ENCODE measurements at regions of chr2 and their contacts with region 1.

Region 1: DNA sequence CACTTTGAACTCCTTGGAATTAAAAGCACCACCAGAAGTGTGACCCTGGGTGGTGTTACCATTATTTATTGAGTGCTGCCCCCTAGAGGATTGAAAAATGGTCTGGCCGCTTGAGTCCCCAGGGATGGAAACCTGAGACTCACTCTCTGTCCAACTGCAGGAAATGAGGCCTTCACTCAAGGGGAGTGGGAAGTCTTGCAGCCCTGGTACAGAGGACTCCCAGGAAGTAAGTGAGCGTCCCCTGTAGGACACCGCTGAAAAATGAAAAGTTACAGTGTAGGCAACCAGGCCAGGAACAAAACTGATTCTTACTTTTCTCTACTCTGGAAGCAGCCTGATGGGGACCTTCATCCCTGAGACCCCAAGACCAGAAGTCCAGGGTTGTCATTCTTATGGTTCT is 2.2 kb upstream of the NRP2 start:
- DNase-seq: peak; percentile 58
- H3K4me3 Mint-ChIP-seq: no peak overlapping the region
- H3K27ac Mint-ChIP-seq: no peak overlapping the region
- H3K4me1 Mint-ChIP-seq: peaks cover 15% of the 10 kb centered on the region
- H3K27me3 Mint-ChIP-seq: peaks cover 48% of the 10 kb centered on the region

Region 2: DNA sequence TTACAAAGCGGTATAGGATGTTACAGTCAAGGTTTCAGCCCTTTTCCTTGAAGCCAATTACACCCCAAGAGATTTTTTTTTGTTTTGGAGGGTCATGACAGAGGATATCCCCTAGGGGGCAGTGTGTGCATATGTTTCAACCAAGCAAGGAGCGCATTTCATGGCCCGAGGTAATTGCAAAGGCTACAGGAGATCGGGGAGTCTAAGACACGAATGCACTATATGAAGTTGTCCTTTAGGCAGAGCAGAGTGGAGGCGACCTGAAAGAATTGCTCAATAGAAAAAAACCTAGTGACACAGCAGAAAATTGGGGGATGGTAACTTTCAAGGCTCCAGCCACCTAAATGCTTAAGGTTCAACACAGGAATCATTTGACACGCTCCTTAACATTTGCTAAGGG is 1354.6 kb before region 1 on chr2:
- CTCF ChIA-PET with region 1: interaction called, 13 read pairs
- POLR2A ChIA-PET with region 1: no interaction called
- intact Hi-C with region 1: loop called (anchors 1 kb)
- DNase-seq: peak; percentile 63
- H3K4me3 Mint-ChIP-seq: no peak overlapping the region
- H3K27ac Mint-ChIP-seq: no peak overlapping the region
- H3K4me1 Mint-ChIP-seq: no peaks in the 10 kb centered on the region
- H3K27me3 Mint-ChIP-seq: peaks cover 4% of the 10 kb centered on the region

Region 3: GRCh38 chr2:205323929-205324328 is 356.1 kb before region 1 on chr2:
- CTCF ChIA-PET with region 1: interaction called, 6 read pairs
- POLR2A ChIA-PET with region 1: no interaction called
- intact Hi-C with region 1: loop called (anchors 2 kb)
- DNase-seq: no peak
- H3K4me3 Mint-ChIP-seq: no peak overlapping the region
- H3K27ac Mint-ChIP-seq: no peak overlapping the region
- H3K4me1 Mint-ChIP-seq: no peaks in the 10 kb centered on the region
- H3K27me3 Mint-ChIP-seq: no peaks in the 10 kb centered on the region

Region 4: DNA sequence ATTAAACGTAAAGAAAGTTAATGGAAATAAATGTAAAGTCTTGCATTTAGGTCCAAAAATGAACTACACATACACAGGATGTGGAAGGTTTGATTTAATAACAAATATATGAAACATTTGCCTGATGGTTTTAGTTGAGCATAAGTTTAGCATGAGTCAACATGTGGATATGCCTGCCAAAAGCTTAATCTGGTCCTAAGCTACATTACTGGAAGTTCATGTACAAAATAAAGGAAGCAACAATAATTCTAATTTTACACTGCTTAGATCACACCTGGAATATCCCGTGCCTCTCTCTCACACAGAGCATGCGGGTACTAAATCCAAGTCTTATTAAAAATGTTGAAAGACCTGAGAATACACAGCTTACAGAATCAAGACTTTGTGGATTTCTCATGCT is 274.3 kb before region 1 on chr2:
- CTCF ChIA-PET with region 1: no interaction called
- POLR2A ChIA-PET with region 1: no interaction called
- intact Hi-C with region 1: no loop called
- DNase-seq: no peak
- H3K4me3 Mint-ChIP-seq: no peak overlapping the region
- H3K27ac Mint-ChIP-seq: no peak overlapping the region
- H3K4me1 Mint-ChIP-seq: no peaks in the 10 kb centered on the region
- H3K27me3 Mint-ChIP-seq: no peaks in the 10 kb centered on the region

Region 5: DNA sequence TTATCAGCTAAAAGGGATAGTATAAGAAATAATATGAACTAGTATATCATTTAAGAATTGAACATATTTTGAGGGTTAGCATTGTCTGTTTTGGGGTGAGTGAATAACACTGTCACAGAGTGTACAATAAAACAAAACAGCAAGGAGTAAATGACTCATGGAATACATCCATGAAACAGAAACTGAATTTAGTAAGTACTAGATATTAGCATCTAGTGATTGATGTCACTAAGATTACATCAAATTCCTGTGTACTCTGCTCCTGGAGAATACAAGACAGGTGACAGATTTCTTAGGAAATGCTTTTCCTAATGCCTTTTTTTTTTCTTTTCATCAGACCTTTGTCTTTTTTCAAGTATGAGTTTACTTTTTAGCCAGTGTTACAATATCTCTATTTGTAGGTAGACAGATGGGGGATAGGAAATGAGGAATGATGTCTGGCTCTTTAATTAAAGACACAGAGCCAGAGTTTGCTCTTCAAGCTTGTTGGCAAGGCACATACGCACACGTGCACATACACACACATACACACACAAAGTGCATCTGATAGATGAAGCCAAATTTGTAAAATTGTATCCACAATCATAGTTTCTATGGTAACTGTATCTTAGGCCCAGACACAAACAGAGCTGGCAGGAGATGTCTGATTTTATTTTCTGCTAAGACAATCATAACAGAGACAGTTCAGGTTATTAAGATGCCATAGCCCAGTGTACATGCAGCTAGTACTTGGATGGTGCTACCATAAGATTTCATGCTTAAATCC is 135.9 kb before region 1 on chr2:
- CTCF ChIA-PET with region 1: no interaction called
- POLR2A ChIA-PET with region 1: no interaction called
- intact Hi-C with region 1: loop called (anchors 5 kb)
- DNase-seq: no peak
- H3K4me3 Mint-ChIP-seq: no peak overlapping the region
- H3K27ac Mint-ChIP-seq: no peak overlapping the region
- H3K4me1 Mint-ChIP-seq: peaks cover 20% of the 10 kb centered on the region
- H3K27me3 Mint-ChIP-seq: no peaks in the 10 kb centered on the region

Region 6: GRCh38 chr2:205590759-205591158 is 89.3 kb before region 1 on chr2:
- CTCF ChIA-PET with region 1: no interaction called
- POLR2A ChIA-PET with region 1: no interaction called
- intact Hi-C with region 1: no loop called
- DNase-seq: no peak
- H3K4me3 Mint-ChIP-seq: no peak overlapping the region
- H3K27ac Mint-ChIP-seq: no peak overlapping the region
- H3K4me1 Mint-ChIP-seq: no peaks in the 10 kb centered on the region
- H3K27me3 Mint-ChIP-seq: no peaks in the 10 kb centered on the region

Region 7: GRCh38 chr2:205660521-205661124 is 19.4 kb before region 1 on chr2:
- CTCF ChIA-PET with region 1: interaction called, 11 read pairs
- POLR2A ChIA-PET with region 1: no interaction called
- intact Hi-C with region 1: no loop called
- DNase-seq: peak; percentile 53
- H3K4me3 Mint-ChIP-seq: no peak overlapping the region
- H3K27ac Mint-ChIP-seq: no peak overlapping the region
- H3K4me1 Mint-ChIP-seq: peaks cover 14% of the 10 kb centered on the region
- H3K27me3 Mint-ChIP-seq: peaks cover 6% of the 10 kb centered on the region

Region 8: DNA sequence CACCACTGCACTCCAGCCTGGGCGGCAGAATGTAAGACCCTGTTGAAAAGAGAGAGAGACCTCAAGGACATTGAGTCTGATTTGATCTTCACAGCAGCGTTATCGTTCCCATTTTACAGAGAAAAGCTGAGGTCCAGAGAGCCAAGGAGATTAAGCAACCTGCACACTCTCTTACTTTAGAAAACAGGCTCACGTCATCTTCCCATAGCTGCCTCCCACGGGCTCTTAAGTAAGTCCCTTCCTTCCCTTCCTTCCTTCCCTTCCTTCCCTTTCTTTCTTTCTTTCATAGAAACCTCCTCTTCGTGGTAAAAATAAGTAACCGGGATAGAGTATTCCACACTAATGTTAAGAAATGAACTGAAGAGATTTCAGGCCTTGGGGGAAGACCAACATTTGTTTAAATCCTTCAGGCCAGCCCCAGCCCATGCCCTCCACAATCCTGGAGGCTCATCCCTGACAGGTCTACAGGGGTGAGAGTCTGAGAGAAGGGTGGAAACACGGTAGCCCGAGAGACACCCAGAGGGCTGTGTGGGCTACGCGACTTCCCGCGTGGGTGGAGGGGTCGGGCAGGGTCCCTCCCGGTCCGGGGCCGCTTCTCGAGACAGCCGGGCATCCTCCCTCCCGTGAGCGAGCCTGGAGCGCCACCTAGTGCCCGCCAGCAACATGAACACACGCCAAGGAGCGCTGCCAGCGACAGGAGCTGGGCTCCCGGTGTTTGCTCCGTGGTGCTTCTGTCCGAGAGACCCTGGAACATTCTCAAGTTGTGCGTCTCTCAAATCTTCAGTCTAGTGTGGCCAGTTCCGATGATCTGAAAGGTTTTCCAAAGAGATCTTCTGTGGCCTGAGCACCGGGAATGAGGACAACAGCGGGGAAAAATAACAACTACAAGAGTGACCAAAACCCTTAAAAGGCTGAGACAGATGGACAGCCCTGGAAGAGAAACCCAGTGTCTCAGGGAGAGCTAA is 245.6 kb after region 1 on chr2:
- CTCF ChIA-PET with region 1: interaction called, 6 read pairs
- POLR2A ChIA-PET with region 1: no interaction called
- intact Hi-C with region 1: loop called (anchors 5 kb)
- DNase-seq: peak; percentile 82
- H3K4me3 Mint-ChIP-seq: no peak overlapping the region
- H3K27ac Mint-ChIP-seq: no peak overlapping the region
- H3K4me1 Mint-ChIP-seq: peaks cover 6% of the 10 kb centered on the region
- H3K27me3 Mint-ChIP-seq: peaks cover 44% of the 10 kb centered on the region

Measured in activated CD4-positive, alpha-beta memory T cell treated with anti-CD3 and anti-CD28 coated beads for 36 hours (primary cell).